Left cardiac atrium (tissue), 4 donors: ENCODE measurements at regions of chr5 and their contacts with region 1.

Region 1: GRCh38 chr5:80069918-80070318 is 34.8 kb downstream of the THBS4 start:
- DNase-seq: no peak
- ATAC-seq: peak; percentile 62 to 71

Region 2: GRCh38 chr5:79990598-79991507 is 79.1 kb before region 1 on chr5 and contains the start of gene MTX3:
- intact Hi-C with region 1: loop called in 1 of 2 experiments (anchors 10 kb)
- DNase-seq: peak; percentile 91
- ATAC-seq: peak; percentile 96 to 97
- total RNA-seq, gene MTX3: 11.2 to 12.2 TPM

Region 3: DNA sequence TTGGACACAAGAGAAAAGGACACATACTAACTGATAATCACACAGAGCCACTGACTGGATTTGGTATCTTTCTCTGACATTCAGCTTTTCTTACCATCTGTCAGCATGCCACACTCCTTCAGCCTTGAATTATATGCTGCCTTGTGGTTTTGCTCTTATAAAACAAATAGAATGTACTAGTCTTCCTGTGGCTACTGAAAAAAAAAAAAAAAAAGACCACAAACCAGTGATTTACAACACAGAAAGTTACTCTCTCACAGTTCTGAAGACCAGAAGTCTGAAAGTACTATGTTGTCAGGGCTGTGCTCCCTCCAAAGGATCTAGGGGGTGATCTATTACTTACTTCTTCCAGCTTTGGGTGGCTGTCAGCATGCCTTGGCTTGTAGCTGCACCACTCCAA is 47.5 kb after region 1 on chr5:
- intact Hi-C with region 1: no loop called
- DNase-seq: no peak
- ATAC-seq: no peak